Left lung (tissue), 14 donors: ENCODE measurements at regions of chr1 and their contacts with region 1.

Region 1: DNA sequence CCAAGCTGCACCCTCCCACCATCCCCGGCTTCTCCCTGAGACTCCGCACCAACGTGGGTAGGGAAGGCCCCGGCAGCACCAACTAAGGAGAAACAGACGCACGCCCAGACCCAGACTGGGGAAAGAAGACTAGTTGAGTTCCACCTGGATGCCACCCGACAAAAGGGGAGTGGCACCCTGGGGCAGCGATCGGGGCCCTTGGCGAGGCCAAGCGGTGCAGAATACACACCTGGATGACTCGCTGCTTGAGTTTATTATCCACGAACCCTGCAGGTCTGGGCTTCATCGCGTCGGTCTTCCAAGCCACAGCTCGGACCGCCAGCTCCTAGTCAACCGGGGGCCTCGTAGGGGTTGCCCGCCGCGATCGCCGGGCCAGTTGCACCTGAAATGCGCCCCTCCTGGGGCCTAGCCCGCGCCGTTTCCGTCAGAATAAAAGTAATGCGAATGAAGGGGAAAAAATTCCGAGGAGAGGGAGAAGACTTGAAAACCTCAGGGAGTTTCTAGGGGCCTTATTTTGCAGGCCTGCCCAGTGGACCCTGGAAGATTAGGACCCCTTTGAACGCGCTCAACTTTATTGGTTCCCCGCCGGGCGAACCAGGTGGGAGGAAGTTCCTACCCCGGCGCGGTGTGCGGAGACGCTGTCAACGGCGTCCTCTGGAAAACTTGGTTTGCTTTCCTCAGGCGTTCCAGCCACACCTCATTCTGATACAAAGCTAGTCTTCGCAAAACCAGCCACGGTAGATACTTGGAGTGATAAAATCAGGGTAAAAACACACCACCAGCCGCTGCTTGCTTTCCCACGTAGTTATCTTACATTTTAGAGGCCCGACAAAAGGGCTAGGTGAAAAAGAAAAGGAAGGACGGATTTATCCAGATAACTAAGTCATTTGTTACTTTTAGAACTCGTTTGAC is at the start of gene NVL:
- DNase-seq: peak; percentile 88 to 93 (median 88)
- ATAC-seq: peak; percentile 95
- H3K4me3 ChIP-seq: peak within 1 kb of the TSS; percentile 66 to 88
- H3K27ac ChIP-seq: peak within 1 kb of the TSS; percentile 93 to 94
- H3K4me1 ChIP-seq: peaks cover 6 to 40% of the 10 kb centered on the region in 2 donors
- H3K27me3 ChIP-seq: no peaks in the 10 kb centered on the region
- CTCF ChIP-seq: no peak
- polyA plus RNA-seq, gene NVL: 37.1 to 46.5 (median 41.4) TPM

Region 2: DNA sequence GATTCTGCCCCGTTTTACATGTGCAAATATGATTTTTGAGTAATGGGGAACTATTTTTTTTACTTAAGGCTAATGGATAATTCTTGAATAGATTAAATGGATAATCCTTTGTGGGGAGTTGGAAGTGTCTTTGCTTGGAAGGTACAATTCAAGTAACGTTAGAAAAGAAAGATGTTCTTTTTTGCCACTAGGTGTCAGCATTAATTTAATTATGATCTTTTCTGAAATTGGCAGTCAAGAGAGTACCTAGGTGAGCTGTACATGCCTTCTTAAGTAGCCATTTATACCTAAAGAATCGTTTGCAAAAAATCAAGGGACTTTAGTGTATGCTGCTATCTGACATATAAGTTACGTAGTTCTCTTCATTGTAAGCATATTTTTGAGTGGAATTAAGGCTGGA is 214.0 kb before region 1 on chr1:
- intact Hi-C with region 1: loop called in 1 of 2 experiments (anchors 5 kb)
- DNase-seq: peak in 2 of 4 donors; percentile 32 to 35
- ATAC-seq: peak; percentile 51
- H3K4me3 ChIP-seq: no peak overlapping the region
- H3K27ac ChIP-seq: no peak overlapping the region
- H3K4me1 ChIP-seq: peaks cover 15 to 33% of the 10 kb centered on the region in 2 donors
- H3K27me3 ChIP-seq: no peaks in the 10 kb centered on the region
- CTCF ChIP-seq: peak; percentile 44 to 53